CD4-positive, alpha-beta T cell (primary cell): ENCODE measurements at regions of chrX and their contacts with region 1.

Region 1: GRCh38 chrX:118928151-118928550 is 46.3 kb upstream of the LONRF3 start:
- DNase-seq: no peak
- ATAC-seq: no peak
- H3K4me3 ChIP-seq: no peak overlapping the region
- H3K4me3 Mint-ChIP-seq: no peak overlapping the region
- H3K27ac ChIP-seq: no peak overlapping the region
- H3K27ac Mint-ChIP-seq: no peak overlapping the region
- H3K4me1 ChIP-seq: no peaks in the 10 kb centered on the region
- H3K4me1 Mint-ChIP-seq: no peaks in the 10 kb centered on the region
- H3K27me3 ChIP-seq: no peaks in the 10 kb centered on the region
- H3K27me3 Mint-ChIP-seq: no peaks in the 10 kb centered on the region
- CTCF ChIP-seq: no peak

Region 2: GRCh38 chrX:118872102-118872566 is 56.0 kb before region 1 on chrX:
- CTCF ChIA-PET with region 1: no interaction called
- POLR2A ChIA-PET with region 1: no interaction called
- intact Hi-C with region 1: loop called in 1 of 2 experiments (anchors 2 kb)
- DNase-seq: no peak
- ATAC-seq: no peak
- H3K4me3 ChIP-seq: no peak overlapping the region
- H3K4me3 Mint-ChIP-seq: no peak overlapping the region
- H3K27ac ChIP-seq: no peak overlapping the region
- H3K27ac Mint-ChIP-seq: no peak overlapping the region
- H3K4me1 ChIP-seq: no peaks in the 10 kb centered on the region
- H3K4me1 Mint-ChIP-seq: no peaks in the 10 kb centered on the region
- H3K27me3 ChIP-seq: no peaks in the 10 kb centered on the region
- H3K27me3 Mint-ChIP-seq: no peaks in the 10 kb centered on the region
- CTCF ChIP-seq: no peak